ENCODE measurements at regions of chr22 and their contacts with region 1.

Region 1: DNA sequence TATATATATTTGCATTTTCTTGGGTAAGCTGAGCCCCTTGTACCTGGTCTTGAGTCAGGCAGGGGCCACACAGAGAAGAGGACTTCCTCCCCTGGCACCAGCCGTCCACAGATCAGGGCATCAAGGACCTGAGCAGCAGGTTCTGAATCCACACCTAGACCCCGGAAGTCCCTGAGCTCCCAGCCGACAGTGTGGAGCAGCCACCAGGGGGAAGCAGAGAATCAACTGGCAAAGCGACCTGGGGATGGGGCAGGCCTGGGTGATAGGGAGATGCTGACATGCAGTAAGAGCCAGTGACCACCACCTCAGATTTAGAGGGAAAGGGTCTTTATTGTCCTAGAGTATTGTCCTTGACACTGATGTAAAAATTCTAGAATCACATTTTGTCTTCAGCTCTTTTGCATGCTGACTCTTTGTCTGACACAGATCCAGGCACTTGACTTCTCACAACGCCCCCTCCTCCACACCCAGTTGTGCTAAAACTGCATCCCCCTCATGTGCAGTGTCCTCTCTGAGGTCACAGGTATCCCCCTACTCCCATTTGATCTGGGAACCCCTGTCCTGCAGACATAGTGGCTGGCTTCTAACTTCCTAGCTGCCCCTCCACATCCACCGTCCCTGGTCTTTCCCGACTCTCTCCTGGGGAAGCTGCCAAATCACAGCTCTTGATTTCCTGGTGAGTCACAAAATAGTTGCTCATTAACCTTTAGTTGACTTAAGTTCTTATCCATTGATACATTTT is 109.3 kb downstream of the GGTLC2 start:
- DNase-seq: peak; percentile 13
- H3K4me3 ChIP-seq: no peak overlapping the region
- H3K27ac ChIP-seq: no peak overlapping the region
- H3K4me1 ChIP-seq: no peaks in the 10 kb centered on the region
- H3K27me3 ChIP-seq: no peaks in the 10 kb centered on the region
- CTCF ChIP-seq: peak; percentile 55 to 64
- POLR2A ChIP-seq: no peak

Region 2: GRCh38 chr22:22743128-22743760 is 10.5 kb before region 1 on chr22:
- CTCF ChIA-PET with region 1: interaction called, 13 read pairs
- POLR2A ChIA-PET with region 1: no interaction called
- dilution Hi-C with region 1: no loop called
- intact Hi-C with region 1: no loop called
- DNase-seq: no peak
- H3K4me3 ChIP-seq: no peak overlapping the region
- H3K27ac ChIP-seq: no peak overlapping the region
- H3K4me1 ChIP-seq: no peaks in the 10 kb centered on the region
- H3K27me3 ChIP-seq: peaks cover 0 to 6% of the 10 kb centered on the region in 2 experiments
- CTCF ChIP-seq: no peak
- POLR2A ChIP-seq: no peak

Region 3: DNA sequence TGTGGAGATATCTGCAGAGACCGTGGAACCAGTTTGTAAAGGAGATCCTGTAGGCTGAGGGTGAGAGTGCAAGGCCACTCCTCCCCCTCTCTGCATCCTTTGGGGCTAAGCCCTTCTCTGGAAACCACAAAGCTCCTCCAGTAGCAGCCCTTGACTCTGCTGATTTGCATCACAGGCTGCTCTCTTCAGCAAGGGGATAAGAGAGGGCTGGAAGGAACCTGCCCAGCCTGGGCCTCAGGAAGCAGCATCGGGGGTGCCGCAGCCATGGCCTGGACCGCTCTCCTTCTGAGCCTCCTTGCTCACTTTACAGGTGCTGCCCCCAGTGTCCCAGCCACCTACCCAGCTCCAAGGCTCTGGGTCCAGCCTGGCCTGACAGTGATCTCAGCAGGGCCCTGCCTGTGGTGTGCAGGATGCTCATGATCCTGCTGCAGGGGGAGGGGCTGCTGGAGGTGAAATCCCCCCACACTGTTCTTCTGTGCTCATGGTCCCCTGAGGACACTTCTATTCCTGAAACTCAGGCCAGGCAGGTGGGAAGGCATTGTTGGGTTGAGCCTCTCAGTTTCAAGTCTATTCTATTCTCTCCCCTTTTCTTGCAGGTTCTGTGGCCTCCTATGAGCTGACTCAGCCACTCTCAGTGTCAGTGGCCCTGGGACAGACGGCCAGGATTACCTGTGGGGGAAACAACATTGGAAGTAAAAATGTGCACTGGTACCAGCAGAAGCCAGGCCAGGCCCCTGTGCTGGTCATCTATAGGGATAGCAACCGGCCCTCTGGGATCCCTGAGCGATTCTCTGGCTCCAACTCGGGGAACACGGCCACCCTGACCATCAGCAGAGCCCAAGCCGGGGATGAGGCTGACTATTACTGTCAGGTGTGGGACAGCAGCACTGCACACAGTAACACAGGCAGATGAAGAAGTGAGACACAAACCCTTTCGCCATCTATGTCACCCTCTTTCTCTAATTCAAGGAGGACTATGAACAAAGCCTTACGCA is 65.5 kb after region 1 on chr22:
- CTCF ChIA-PET with region 1: no interaction called
- POLR2A ChIA-PET with region 1: no interaction called
- dilution Hi-C with region 1: no loop called
- intact Hi-C with region 1: no loop called
- DNase-seq: no peak
- H3K4me3 ChIP-seq: no peak overlapping the region
- H3K27ac ChIP-seq: no peak overlapping the region
- H3K4me1 ChIP-seq: no peaks in the 10 kb centered on the region
- H3K27me3 ChIP-seq: no peaks in the 10 kb centered on the region
- CTCF ChIP-seq: no peak
- POLR2A ChIP-seq: no peak

Measured in endothelial cell of umbilical vein (primary cell).